Uterus (tissue), 4 donors: ENCODE measurements at regions of chr3 and their contacts with region 1.

Region 1: DNA sequence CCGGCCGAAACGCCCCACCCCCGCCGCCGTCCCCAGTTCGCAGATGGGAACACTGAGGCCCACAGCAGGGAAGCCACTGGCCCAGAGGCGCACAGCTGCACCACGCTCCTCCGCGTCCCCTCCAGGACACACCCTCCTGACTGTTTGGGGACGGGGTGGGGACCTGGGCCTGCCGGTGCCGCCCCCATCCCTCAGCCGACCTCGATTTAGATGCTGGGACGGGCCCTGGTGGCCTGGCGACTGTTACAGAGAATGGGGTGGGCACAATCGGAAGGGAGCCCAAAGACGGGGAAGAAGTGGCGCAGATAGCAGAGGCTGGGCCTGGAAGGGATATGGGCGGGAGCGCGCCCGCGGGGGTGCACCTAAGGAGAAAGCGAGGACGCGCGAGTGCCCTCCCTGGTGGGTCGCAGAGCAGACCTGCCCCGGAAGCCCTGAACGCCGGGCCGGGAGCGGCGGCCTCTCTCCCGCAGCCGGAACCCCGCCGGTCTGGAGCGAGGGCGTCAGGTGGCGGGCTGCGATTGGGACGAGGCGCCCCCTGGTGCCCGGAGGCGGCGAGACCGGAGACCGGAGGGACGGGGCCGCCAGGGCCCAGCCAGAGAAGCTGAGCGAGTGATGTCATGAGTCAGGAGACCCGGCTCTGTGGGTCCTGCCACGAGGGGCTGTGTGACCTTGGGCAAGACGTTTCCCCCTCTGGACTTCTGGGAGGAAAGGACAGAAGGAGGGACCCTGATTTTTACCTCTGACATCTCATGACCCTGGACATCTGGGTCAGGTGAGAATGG is 78.4 kb downstream of the IQSEC1 start:
- DNase-seq: peak; percentile 85 to 91
- H3K4me3 ChIP-seq: peak overlapping the region; percentile 79 to 83
- H3K27ac ChIP-seq: peak overlapping the region; percentile 83 to 87
- H3K4me1 ChIP-seq: no peaks in the 10 kb centered on the region
- H3K27me3 ChIP-seq: no peaks in the 10 kb centered on the region
- CTCF ChIP-seq: peak; percentile 88 to 98 (median 96)
- POLR2A ChIP-seq: peak; percentile 42 to 69

Region 2: GRCh38 chr3:12891985-12892839 is 102.6 kb before region 1 on chr3:
- intact Hi-C with region 1: loop called (anchors 10 kb)
- DNase-seq: peak; percentile 44 to 52
- H3K4me3 ChIP-seq: peak overlapping the region in 1 of 2 donors; percentile 17
- H3K27ac ChIP-seq: no peak overlapping the region
- H3K4me1 ChIP-seq: peaks cover 0 to 6% of the 10 kb centered on the region in 2 donors
- H3K27me3 ChIP-seq: no peaks in the 10 kb centered on the region
- CTCF ChIP-seq: peak; percentile 90 to 95 (median 92)
- POLR2A ChIP-seq: no peak